ENCODE measurements at regions of chr12 and their contacts with region 1.

Region 1: GRCh38 chr12:91811481-91812287 is 334.0 kb downstream of the BTG1 start:
- DNase-seq: peak; percentile 27
- CTCF ChIP-seq: peak; percentile 69

Region 2: GRCh38 chr12:91778938-91779400 is 32.7 kb before region 1 on chr12:
- CTCF ChIA-PET with region 1: interaction called, 18 read pairs
- POLR2A ChIA-PET with region 1: no interaction called
- DNase-seq: peak; percentile 53
- CTCF ChIP-seq: no peak

Region 3: GRCh38 chr12:91792597-91792996 is 19.1 kb before region 1 on chr12:
- CTCF ChIA-PET with region 1: interaction called, 35 read pairs
- POLR2A ChIA-PET with region 1: no interaction called
- DNase-seq: no peak
- CTCF ChIP-seq: no peak

Region 4: GRCh38 chr12:91824991-91825390 is 13.3 kb after region 1 on chr12:
- CTCF ChIA-PET with region 1: interaction called, 34 read pairs
- POLR2A ChIA-PET with region 1: no interaction called
- DNase-seq: no peak
- CTCF ChIP-seq: no peak

Region 5: GRCh38 chr12:91841822-91842221 is 30.1 kb after region 1 on chr12:
- CTCF ChIA-PET with region 1: interaction called, 26 read pairs
- POLR2A ChIA-PET with region 1: no interaction called
- DNase-seq: no peak
- CTCF ChIP-seq: no peak

Region 6: GRCh38 chr12:91890742-91891141 is 79.1 kb after region 1 on chr12:
- CTCF ChIA-PET with region 1: no interaction called
- POLR2A ChIA-PET with region 1: no interaction called
- DNase-seq: no peak
- CTCF ChIP-seq: no peak

Region 7: GRCh38 chr12:92570056-92570753 is 758.5 kb after region 1 on chr12:
- CTCF ChIA-PET with region 1: interaction called, 21 read pairs
- POLR2A ChIA-PET with region 1: no interaction called
- DNase-seq: peak; percentile 47
- CTCF ChIP-seq: peak; percentile 73